Activated CD4-positive, alpha-beta T cell treated with anti-CD3 and anti-CD28 coated beads for 36 hours (primary cell): ENCODE measurements at regions of chr4 and their contacts with region 1.

Region 1: GRCh38 chr4:98143001-98143899 is at the start of gene STPG2:
- DNase-seq: peak; percentile 96
- ATAC-seq: peak; percentile 100
- H3K4me3 Mint-ChIP-seq: peak within 1 kb of the TSS; percentile 96
- H3K27ac Mint-ChIP-seq: peak within 1 kb of the TSS; percentile 99
- H3K4me1 Mint-ChIP-seq: peaks cover 22% of the 10 kb centered on the region
- H3K27me3 Mint-ChIP-seq: no peaks in the 10 kb centered on the region
- total RNA-seq, gene STPG2: 0.14 to 0.25 TPM

Region 2: GRCh38 chr4:98406819-98407218 is 263.6 kb after region 1 on chr4:
- CTCF ChIA-PET with region 1: no interaction called
- POLR2A ChIA-PET with region 1: no interaction called
- intact Hi-C with region 1: loop called in 1 of 2 experiments (anchors 10 kb)
- DNase-seq: no peak
- ATAC-seq: peak; percentile 60
- H3K4me3 Mint-ChIP-seq: no peak overlapping the region
- H3K27ac Mint-ChIP-seq: no peak overlapping the region
- H3K4me1 Mint-ChIP-seq: peaks cover 11% of the 10 kb centered on the region
- H3K27me3 Mint-ChIP-seq: no peaks in the 10 kb centered on the region

Region 3: DNA sequence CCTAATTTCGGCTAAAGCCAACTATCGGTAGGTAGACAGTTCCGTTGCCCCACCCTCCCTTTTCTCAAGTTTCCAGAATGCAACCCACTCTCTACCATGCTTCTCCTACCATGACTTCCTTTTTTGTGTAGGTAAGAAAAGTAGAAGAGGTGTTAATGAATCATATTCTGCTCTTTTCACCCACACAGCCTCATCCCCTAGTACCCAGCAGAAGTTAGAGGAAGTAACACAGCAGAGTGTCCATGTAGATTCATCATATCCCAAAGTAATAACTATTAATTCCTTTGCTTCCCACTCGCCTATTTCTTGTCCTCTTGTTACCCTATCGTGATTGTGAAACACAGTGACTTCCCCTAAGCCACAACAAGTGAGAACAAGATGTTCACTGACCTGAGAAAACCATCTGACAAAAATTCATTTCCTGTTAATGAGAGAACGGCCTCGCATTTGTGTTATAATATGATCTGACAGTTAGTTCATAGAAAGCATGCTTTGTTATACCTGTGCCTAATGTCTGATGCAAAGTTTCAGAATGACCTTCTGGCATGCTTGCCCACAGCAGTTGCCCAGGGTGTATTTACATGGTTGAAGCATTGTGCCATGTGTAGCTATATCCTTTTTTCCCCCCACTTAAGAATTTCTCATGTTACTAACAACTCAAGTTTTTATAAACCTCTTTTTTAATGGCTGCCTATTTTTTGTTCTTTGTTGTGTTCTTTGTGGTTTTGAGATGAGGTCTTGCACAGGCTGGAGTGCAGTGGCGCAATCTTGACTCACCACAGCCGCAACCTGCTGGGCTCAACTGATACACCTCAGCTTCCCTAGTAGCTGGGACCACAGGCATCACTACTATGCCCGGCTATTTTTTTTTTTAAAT is 303.5 kb after region 1 on chr4:
- CTCF ChIA-PET with region 1: no interaction called
- POLR2A ChIA-PET with region 1: no interaction called
- intact Hi-C with region 1: loop called (anchors 5 to 10 kb)
- DNase-seq: peak; percentile 78
- ATAC-seq: peak; percentile 91
- H3K4me3 Mint-ChIP-seq: peak overlapping the region; percentile 43
- H3K27ac Mint-ChIP-seq: peak overlapping the region; percentile 93
- H3K4me1 Mint-ChIP-seq: peaks cover 36% of the 10 kb centered on the region
- H3K27me3 Mint-ChIP-seq: no peaks in the 10 kb centered on the region

Region 4: DNA sequence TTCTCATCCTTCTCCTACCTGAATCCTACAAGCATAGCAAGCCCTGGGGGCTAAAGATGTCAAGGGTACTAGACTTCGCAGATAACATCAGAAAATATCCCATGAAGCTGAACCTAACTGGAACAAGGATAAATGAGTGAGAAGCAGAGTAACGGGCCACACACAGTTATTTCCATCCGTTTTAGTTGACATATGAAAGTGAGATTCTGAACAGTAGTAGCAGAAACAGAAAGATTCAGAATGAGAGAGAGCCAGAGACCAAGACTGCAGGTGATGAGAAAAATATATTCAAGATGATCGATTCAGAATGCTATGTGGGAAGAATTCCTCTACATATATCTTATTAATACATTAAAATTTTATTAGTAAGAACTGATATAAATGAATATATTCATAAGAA is 350.0 kb after region 1 on chr4:
- CTCF ChIA-PET with region 1: no interaction called
- POLR2A ChIA-PET with region 1: no interaction called
- intact Hi-C with region 1: no loop called
- DNase-seq: no peak
- ATAC-seq: peak; percentile 84
- H3K4me3 Mint-ChIP-seq: no peak overlapping the region
- H3K27ac Mint-ChIP-seq: peak overlapping the region; percentile 34
- H3K4me1 Mint-ChIP-seq: peaks cover 22% of the 10 kb centered on the region
- H3K27me3 Mint-ChIP-seq: no peaks in the 10 kb centered on the region

Region 5: DNA sequence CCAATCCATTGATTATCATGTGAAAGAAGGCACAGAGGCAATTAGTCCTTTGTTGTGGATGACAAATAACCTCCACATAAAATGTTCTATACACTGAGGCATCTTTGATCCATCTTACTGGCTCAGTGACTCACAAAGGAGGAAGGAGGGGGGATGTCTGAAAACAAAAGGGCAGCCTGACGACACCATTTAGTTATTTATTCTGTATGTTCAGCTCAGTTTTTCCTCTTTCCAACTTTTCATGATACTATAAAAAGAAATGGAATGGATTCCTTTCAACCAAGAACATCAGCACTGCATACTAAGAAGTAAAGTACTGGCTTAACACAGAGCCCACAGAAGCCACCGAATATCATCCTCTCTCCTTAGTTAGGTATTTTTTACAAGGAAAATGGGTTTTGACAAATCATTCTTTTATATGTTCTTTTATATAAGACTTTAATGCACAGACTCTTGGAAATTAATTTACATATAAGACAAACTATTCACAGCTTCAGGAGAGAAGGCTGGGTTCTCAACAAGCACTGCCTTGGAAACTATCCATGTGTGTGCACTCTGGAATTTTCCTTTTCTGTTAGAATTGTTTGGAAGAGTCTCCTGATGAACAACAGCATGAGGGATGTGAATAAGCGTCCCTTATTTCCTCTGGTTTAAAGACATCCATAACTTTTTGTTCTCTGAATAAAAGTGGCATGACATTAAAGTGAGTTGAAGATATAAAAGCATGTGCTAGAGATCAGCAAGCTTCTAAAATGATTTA is 379.6 kb after region 1 on chr4:
- CTCF ChIA-PET with region 1: no interaction called
- POLR2A ChIA-PET with region 1: no interaction called
- intact Hi-C with region 1: loop called in 1 of 2 experiments (anchors 5 kb)
- DNase-seq: no peak
- ATAC-seq: peak; percentile 84
- H3K4me3 Mint-ChIP-seq: peak overlapping the region; percentile 28
- H3K27ac Mint-ChIP-seq: peak overlapping the region; percentile 74
- H3K4me1 Mint-ChIP-seq: peaks cover 64% of the 10 kb centered on the region
- H3K27me3 Mint-ChIP-seq: no peaks in the 10 kb centered on the region

Region 6: DNA sequence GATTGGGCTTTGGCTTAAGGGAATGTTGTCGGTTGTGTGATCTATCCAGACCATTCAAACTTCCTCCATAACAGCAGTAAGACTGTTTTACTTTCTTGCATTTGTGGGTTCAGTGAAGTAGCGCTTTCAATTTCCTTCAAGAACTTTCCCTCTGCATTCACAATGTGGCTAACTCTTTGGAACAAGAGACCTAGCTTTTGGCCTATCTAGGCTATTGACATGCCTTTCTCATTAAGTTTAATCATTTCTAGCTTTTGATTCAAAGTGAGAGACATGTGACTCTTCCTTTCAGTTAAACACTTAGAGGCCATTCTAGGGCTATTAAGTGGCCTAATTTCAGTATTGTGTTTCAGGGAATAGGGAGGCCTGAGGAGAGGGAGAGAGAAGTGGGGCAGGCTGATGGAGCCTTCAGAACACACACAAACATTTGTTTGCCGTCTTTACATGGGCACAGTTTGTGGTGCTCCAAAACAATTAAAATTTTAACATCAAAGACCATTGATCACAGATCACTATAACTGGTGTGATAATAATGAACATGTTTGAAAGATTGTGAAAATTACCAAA is 911.3 kb after region 1 on chr4:
- CTCF ChIA-PET with region 1: interaction called, 5 read pairs
- POLR2A ChIA-PET with region 1: no interaction called
- intact Hi-C with region 1: loop called (anchors 2 to 10 kb)
- DNase-seq: no peak
- ATAC-seq: peak; percentile 23
- H3K4me3 Mint-ChIP-seq: no peak overlapping the region
- H3K27ac Mint-ChIP-seq: peak overlapping the region; percentile 63
- H3K4me1 Mint-ChIP-seq: peaks cover 44% of the 10 kb centered on the region
- H3K27me3 Mint-ChIP-seq: no peaks in the 10 kb centered on the region

Region 7: GRCh38 chr4:99088481-99089365 is 945.5 kb after region 1 on chr4 and contains the start of gene ADH5:
- CTCF ChIA-PET with region 1: no interaction called
- POLR2A ChIA-PET with region 1: no interaction called
- intact Hi-C with region 1: loop called (anchors 1 kb)
- DNase-seq: peak; percentile 96
- ATAC-seq: peak; percentile 97
- H3K4me3 Mint-ChIP-seq: peak within 1 kb of the TSS; percentile 98
- H3K27ac Mint-ChIP-seq: peak within 1 kb of the TSS; percentile 99
- H3K4me1 Mint-ChIP-seq: peaks cover 42% of the 10 kb centered on the region
- H3K27me3 Mint-ChIP-seq: no peaks in the 10 kb centered on the region
- total RNA-seq, gene ADH5: 81.3 to 119 TPM